ENCODE measurements at regions of chrX and their contacts with region 1.

Region 1: GRCh38 chrX:80876877-80877276 is 67.2 kb upstream of the BRWD3 start:
- DNase-seq: peak; percentile 64
- H3K4me3 Mint-ChIP-seq: no peak overlapping the region
- H3K27ac Mint-ChIP-seq: no peak overlapping the region
- H3K4me1 Mint-ChIP-seq: peaks cover 6% of the 10 kb centered on the region
- H3K27me3 Mint-ChIP-seq: no peaks in the 10 kb centered on the region
- CTCF ChIP-seq: peak; percentile 47

Region 2: GRCh38 chrX:80765186-80765585 is 111.7 kb before region 1 on chrX:
- CTCF ChIA-PET with region 1: no interaction called
- POLR2A ChIA-PET with region 1: no interaction called
- intact Hi-C with region 1: no loop called
- DNase-seq: peak; percentile 14
- H3K4me3 Mint-ChIP-seq: no peak overlapping the region
- H3K27ac Mint-ChIP-seq: peak overlapping the region; percentile 31
- H3K4me1 Mint-ChIP-seq: peaks cover 7% of the 10 kb centered on the region
- H3K27me3 Mint-ChIP-seq: no peaks in the 10 kb centered on the region
- CTCF ChIP-seq: no peak

Region 3: DNA sequence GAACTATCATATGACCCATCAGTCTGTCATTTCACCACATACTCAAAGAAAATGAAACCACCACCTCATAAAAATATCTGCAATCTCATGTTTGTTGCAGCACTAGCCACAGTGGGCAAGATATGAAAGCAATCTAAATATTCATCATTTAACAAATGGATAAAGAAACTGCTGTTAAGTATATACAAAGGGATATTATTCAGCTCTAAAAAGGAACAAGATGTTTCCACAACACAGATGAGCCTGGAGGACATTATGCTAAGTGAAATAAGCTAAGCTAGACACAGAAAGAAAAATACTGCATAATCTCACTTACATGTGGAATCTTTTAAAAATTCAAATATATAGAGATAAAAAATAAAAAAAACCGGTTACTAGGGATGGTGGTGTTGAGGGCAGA is 41.0 kb after region 1 on chrX:
- CTCF ChIA-PET with region 1: no interaction called
- POLR2A ChIA-PET with region 1: no interaction called
- intact Hi-C with region 1: no loop called
- DNase-seq: no peak
- H3K4me3 Mint-ChIP-seq: no peak overlapping the region
- H3K27ac Mint-ChIP-seq: no peak overlapping the region
- H3K4me1 Mint-ChIP-seq: no peaks in the 10 kb centered on the region
- H3K27me3 Mint-ChIP-seq: no peaks in the 10 kb centered on the region
- CTCF ChIP-seq: no peak

Region 4: GRCh38 chrX:81121513-81122382 is 244.9 kb after region 1 on chrX:
- CTCF ChIA-PET with region 1: interaction called, 14 read pairs
- POLR2A ChIA-PET with region 1: interaction called, 6 read pairs
- intact Hi-C with region 1: loop called (anchors 1 kb)
- DNase-seq: peak; percentile 94
- H3K4me3 Mint-ChIP-seq: peak overlapping the region; percentile 80
- H3K27ac Mint-ChIP-seq: peak overlapping the region; percentile 69
- H3K4me1 Mint-ChIP-seq: no peaks in the 10 kb centered on the region
- H3K27me3 Mint-ChIP-seq: no peaks in the 10 kb centered on the region
- CTCF ChIP-seq: no peak

Region 5: GRCh38 chrX:81174286-81174685 is 297.4 kb after region 1 on chrX:
- CTCF ChIA-PET with region 1: no interaction called
- POLR2A ChIA-PET with region 1: no interaction called
- intact Hi-C with region 1: loop called (anchors 5 kb)
- DNase-seq: peak; percentile 30
- H3K4me3 Mint-ChIP-seq: no peak overlapping the region
- H3K27ac Mint-ChIP-seq: no peak overlapping the region
- H3K4me1 Mint-ChIP-seq: no peaks in the 10 kb centered on the region
- H3K27me3 Mint-ChIP-seq: no peaks in the 10 kb centered on the region
- CTCF ChIP-seq: peak; percentile 33

Region 6: GRCh38 chrX:81377329-81377728 is 500.5 kb after region 1 on chrX:
- CTCF ChIA-PET with region 1: interaction called, 7 read pairs
- POLR2A ChIA-PET with region 1: no interaction called
- intact Hi-C with region 1: loop called (anchors 1 kb)
- DNase-seq: peak; percentile 40
- H3K4me3 Mint-ChIP-seq: no peak overlapping the region
- H3K27ac Mint-ChIP-seq: no peak overlapping the region
- H3K4me1 Mint-ChIP-seq: no peaks in the 10 kb centered on the region
- H3K27me3 Mint-ChIP-seq: no peaks in the 10 kb centered on the region
- CTCF ChIP-seq: peak; percentile 46

Region 7: GRCh38 chrX:81414630-81415029 is 537.8 kb after region 1 on chrX:
- CTCF ChIA-PET with region 1: no interaction called
- POLR2A ChIA-PET with region 1: no interaction called
- intact Hi-C with region 1: loop called (anchors 10 kb)
- DNase-seq: no peak
- H3K4me3 Mint-ChIP-seq: no peak overlapping the region
- H3K27ac Mint-ChIP-seq: no peak overlapping the region
- H3K4me1 Mint-ChIP-seq: no peaks in the 10 kb centered on the region
- H3K27me3 Mint-ChIP-seq: no peaks in the 10 kb centered on the region
- CTCF ChIP-seq: no peak

Measured in MCF 10A (cell line).